Esophagus muscularis mucosa (tissue), 4 donors: ENCODE measurements at regions of chr6 and their contacts with region 1.

Region 1: DNA sequence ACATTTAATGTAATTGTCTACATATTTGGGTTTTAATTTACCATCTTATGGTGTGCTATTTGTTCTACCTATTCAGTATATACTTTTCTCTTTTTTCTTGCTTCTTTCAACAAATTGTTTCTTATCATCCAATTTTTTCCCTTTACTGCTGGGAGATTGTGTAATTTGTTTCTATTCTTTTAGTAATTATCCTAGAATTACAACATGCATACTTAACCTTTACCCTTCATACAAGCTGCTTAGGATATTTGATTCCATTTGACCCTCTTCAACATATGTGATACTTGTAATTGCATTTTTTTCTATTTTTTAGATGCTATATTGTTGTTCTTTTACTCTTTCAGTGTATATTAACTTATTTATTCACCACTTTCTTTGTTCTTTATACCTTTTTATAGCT is 15.1 kb upstream of the TBPL1 start:
- DNase-seq: no peak
- H3K4me3 ChIP-seq: no peak overlapping the region
- H3K27ac ChIP-seq: no peak overlapping the region
- H3K4me1 ChIP-seq: no peaks in the 10 kb centered on the region
- H3K27me3 ChIP-seq: no peaks in the 10 kb centered on the region
- CTCF ChIP-seq: no peak
- EP300 ChIP-seq: no peak
- POLR2A ChIP-seq: no peak

Region 2: DNA sequence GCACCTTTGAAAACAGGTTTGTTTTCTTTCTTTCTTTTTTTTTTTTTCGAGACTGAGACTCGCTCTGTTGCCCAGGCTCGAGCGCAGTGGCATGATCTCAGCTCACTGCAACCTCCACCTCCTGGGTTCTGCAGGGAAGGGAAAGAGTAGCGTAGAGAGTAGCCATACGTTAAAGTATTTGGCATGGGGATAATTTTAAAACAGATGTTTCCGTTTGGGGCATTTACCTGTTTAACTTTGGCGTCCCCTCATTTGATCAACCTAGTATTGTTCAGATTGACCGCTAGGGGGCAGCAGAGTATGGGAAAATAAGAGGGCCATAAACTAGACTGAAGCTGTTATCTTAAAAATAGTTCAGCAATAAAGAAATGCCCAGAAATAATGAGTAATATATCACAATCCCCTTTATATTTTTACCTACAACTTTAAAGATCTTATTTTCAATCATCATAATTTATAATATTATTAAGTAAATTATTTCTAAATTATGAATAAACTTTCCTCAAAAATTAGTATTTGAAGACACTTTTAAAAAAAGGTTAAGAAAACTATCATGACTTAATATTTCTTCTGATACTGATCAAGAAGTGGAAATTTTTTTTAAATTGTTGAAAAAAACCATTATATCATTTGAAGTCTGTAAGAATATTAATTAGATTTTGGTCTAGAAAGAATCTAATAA is 1407.5 kb before region 1 on chr6:
- intact Hi-C with region 1: no loop called
- DNase-seq: no peak
- H3K4me3 ChIP-seq: no peak overlapping the region
- H3K27ac ChIP-seq: no peak overlapping the region
- H3K4me1 ChIP-seq: peaks cover 0 to 4% (median 2%) of the 10 kb centered on the region in 4 donors
- H3K27me3 ChIP-seq: no peaks in the 10 kb centered on the region
- CTCF ChIP-seq: peak; percentile 72 to 83 (median 76)
- EP300 ChIP-seq: no peak
- POLR2A ChIP-seq: no peak

Region 3: GRCh38 chr6:133966654-133967329 is 28.9 kb after region 1 on chr6:
- intact Hi-C with region 1: loop called (anchors 5 kb)
- DNase-seq: no peak
- H3K4me3 ChIP-seq: no peak overlapping the region
- H3K27ac ChIP-seq: no peak overlapping the region
- H3K4me1 ChIP-seq: peaks cover 5 to 29% (median 24%) of the 10 kb centered on the region in 4 donors
- H3K27me3 ChIP-seq: no peaks in the 10 kb centered on the region
- CTCF ChIP-seq: no peak
- EP300 ChIP-seq: no peak
- POLR2A ChIP-seq: no peak

Region 4: GRCh38 chr6:134303903-134304302 is 366.0 kb after region 1 on chr6:
- intact Hi-C with region 1: no loop called
- DNase-seq: no peak
- H3K4me3 ChIP-seq: no peak overlapping the region
- H3K27ac ChIP-seq: no peak overlapping the region
- H3K4me1 ChIP-seq: no peaks in the 10 kb centered on the region
- H3K27me3 ChIP-seq: no peaks in the 10 kb centered on the region
- CTCF ChIP-seq: no peak
- EP300 ChIP-seq: no peak
- POLR2A ChIP-seq: no peak